Activated naive CD4-positive, alpha-beta T cell treated with anti-CD3 and anti-CD28 coated beads, Interleukin-2, amount 10 ng/mL, durations not matched to agents 7 days and 5 days (primary cell): ENCODE measurements at regions of chr6 and their contacts with region 1.

Region 1: DNA sequence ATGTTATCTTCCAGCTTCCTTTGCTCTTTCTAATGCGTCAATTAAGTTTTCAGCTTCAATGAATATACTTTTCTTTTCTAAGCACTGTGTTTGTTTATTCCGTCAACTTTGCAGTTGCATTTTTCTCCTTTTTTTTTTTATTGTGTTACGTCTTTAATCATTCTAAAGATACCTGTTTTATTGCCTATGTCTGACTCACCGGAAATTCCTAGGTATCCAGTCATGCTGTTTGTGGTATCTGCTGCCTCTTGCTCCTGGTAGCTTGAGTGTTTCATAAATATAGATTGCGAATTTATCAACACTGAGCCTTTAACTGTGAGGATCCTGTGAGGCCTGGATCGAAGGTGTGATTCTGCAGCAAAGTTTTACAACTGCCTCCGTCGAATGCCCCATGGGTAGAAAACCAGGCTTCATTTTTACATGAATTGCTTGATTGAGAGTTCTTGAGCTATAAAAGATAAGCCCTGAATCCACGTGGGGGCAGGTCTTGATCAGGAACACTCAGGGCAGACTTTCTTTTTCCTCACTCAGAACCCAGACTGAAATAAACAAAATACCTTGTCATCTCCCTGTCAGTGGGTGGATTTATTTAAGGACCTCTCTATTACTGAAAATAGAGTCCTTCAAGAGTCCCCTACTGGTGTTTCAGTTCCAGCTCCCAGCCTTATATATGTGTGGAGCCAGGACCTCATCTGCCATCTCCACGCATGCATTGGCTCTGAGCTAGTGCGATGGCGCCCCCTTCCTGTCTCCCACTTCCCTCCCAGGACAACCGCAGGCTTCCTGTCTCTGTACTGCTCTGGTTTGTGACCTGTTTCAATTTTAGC is 60.1 kb upstream of the LRRC1 start:
- DNase-seq: peak; percentile 52
- H3K4me3 Mint-ChIP-seq: no peak overlapping the region
- H3K27ac Mint-ChIP-seq: no peak overlapping the region
- H3K4me1 Mint-ChIP-seq: peaks cover 28% of the 10 kb centered on the region
- H3K27me3 Mint-ChIP-seq: peaks cover 10% of the 10 kb centered on the region

Region 2: DNA sequence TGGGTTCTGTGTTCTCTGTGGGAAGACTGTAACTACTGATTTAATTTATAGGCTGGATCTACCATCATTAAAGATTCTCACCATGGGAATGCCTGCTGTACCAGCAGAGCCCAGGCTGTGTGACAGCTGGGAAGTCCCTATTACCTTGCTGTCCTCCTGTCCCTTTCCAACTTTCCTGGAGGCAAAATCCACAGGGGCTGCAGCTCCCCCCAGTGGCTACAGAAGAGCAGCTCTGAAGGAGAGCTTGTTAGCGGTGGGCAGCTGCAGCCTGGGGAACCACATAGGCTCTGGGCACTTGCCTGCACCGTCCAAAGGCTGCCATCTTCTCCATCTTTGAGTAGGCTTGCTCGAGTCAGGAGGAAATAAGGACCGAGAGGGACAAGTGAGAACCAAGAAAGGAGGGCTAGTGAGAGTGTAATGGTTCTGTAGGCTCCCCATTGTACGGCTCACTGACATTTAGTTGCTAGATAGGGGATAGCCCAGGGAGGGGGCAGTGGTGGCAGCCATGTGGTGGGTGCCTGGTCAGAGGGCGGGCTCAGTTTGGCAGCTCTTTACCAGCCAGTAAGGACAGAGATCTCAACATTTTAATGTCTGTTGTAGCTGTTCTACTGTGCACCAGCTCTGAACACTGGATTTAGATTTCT is 221.5 kb after region 1 on chr6:
- CTCF ChIA-PET with region 1: interaction called, 14 read pairs
- DNase-seq: no peak
- H3K4me3 Mint-ChIP-seq: no peak overlapping the region
- H3K27ac Mint-ChIP-seq: no peak overlapping the region
- H3K4me1 Mint-ChIP-seq: no peaks in the 10 kb centered on the region
- H3K27me3 Mint-ChIP-seq: peaks cover 5% of the 10 kb centered on the region